ENCODE measurements at regions of chr3 and their contacts with region 1.

Region 1: GRCh38 chr3:98593046-98593936 is at the start of gene CPOX:
- DNase-seq: peak; percentile 89
- H3K4me3 ChIP-seq: peak within 1 kb of the TSS; percentile 52 to 94 (median 76)
- H3K27ac ChIP-seq: peak within 1 kb of the TSS; percentile 49
- H3K4me1 ChIP-seq: peaks cover 10% of the 10 kb centered on the region
- H3K27me3 ChIP-seq: no peaks in the 10 kb centered on the region
- CTCF ChIP-seq: no peak
- POLR2A ChIP-seq: peak; percentile 44
- total RNA-seq, gene CPOX: 19.9 and 24.5 TPM in 2 replicates

Region 2: GRCh38 chr3:98039322-98040024 is 553.8 kb before region 1 on chr3:
- CTCF ChIA-PET with region 1: no interaction called
- POLR2A ChIA-PET with region 1: no interaction called
- dilution Hi-C with region 1: no loop called
- intact Hi-C with region 1: loop called (anchors 5 kb)
- DNase-seq: peak; percentile 87
- H3K4me3 ChIP-seq: peak overlapping the region in 2 of 3 experiments; percentile 19 to 56
- H3K27ac ChIP-seq: no peak overlapping the region
- H3K4me1 ChIP-seq: no peaks in the 10 kb centered on the region
- H3K27me3 ChIP-seq: peaks cover 9 to 14% of the 10 kb centered on the region in 2 experiments
- CTCF ChIP-seq: peak; percentile 76 to 84
- POLR2A ChIP-seq: no peak

Region 3: GRCh38 chr3:98791341-98792325 is 198.3 kb after region 1 on chr3:
- CTCF ChIA-PET with region 1: interaction called, 15 read pairs
- POLR2A ChIA-PET with region 1: no interaction called
- dilution Hi-C with region 1: no loop called
- intact Hi-C with region 1: no loop called
- DNase-seq: peak; percentile 82
- H3K4me3 ChIP-seq: no peak overlapping the region
- H3K27ac ChIP-seq: peak overlapping the region; percentile 2
- H3K4me1 ChIP-seq: peaks cover 20% of the 10 kb centered on the region
- H3K27me3 ChIP-seq: no peaks in the 10 kb centered on the region
- CTCF ChIP-seq: no peak
- POLR2A ChIP-seq: no peak

Region 4: GRCh38 chr3:98809557-98809956 is 216.3 kb after region 1 on chr3:
- CTCF ChIA-PET with region 1: interaction called, 63 read pairs
- POLR2A ChIA-PET with region 1: no interaction called
- dilution Hi-C with region 1: no loop called
- intact Hi-C with region 1: no loop called
- DNase-seq: peak; percentile 68
- H3K4me3 ChIP-seq: no peak overlapping the region
- H3K27ac ChIP-seq: no peak overlapping the region
- H3K4me1 ChIP-seq: peaks cover 3% of the 10 kb centered on the region
- H3K27me3 ChIP-seq: no peaks in the 10 kb centered on the region
- CTCF ChIP-seq: no peak
- POLR2A ChIP-seq: no peak

Measured in endothelial cell of umbilical vein (primary cell).